ENCODE measurements at regions of chr6 and their contacts with region 1.

Region 1: DNA sequence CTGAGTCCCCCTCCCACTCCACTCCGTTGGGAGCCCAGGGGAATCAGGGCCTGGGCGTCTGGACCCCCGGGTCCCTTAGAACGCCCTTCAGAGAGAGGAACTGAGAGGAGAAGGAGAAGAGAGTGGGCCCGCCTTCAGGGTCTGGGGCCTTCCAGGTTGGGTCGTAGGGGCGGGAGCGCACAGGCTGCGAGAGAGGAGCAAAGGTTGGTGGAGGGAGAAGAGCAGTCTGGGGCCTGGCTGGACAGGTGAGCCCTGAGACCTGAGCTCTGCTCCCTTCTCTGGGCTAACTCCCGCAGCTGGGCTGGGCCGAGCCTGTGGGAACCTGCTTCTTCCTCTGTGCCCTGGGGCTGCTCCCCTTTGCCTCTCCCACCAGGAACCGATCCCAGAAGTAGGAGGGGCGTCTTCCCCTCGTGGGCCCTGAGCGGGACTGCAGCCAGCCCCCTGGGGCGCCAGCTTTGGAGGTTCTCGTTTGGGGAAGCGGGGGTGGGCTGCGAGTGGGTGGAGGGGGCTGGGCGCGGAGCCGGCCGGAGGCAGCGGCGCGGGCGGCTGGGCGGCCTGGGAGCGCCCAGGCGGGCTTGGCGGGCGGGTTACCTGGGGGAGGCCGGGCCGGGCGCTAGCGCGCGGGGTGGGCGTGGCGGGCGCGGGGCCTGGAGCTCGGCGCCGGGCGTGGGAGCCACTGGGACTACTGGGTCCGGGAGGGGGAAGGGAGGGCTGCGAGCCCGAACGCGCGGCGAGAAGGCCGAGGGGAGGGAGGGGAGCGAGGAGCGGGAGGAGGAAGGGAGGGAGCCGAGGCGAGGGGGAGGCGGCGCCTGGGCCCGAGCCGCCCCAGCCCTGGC is at the start of gene DDR1:
- DNase-seq: peak; percentile 81 to 85
- H3K4me3 ChIP-seq: peak within 1 kb of the TSS; percentile 98
- H3K27ac ChIP-seq: peak within 1 kb of the TSS; percentile 94
- H3K4me1 ChIP-seq: peaks cover 44% of the 10 kb centered on the region
- H3K27me3 ChIP-seq: no peaks in the 10 kb centered on the region
- CTCF ChIP-seq: no peak
- total RNA-seq, gene DDR1: 267 and 269 TPM in 2 replicates

Region 2: DNA sequence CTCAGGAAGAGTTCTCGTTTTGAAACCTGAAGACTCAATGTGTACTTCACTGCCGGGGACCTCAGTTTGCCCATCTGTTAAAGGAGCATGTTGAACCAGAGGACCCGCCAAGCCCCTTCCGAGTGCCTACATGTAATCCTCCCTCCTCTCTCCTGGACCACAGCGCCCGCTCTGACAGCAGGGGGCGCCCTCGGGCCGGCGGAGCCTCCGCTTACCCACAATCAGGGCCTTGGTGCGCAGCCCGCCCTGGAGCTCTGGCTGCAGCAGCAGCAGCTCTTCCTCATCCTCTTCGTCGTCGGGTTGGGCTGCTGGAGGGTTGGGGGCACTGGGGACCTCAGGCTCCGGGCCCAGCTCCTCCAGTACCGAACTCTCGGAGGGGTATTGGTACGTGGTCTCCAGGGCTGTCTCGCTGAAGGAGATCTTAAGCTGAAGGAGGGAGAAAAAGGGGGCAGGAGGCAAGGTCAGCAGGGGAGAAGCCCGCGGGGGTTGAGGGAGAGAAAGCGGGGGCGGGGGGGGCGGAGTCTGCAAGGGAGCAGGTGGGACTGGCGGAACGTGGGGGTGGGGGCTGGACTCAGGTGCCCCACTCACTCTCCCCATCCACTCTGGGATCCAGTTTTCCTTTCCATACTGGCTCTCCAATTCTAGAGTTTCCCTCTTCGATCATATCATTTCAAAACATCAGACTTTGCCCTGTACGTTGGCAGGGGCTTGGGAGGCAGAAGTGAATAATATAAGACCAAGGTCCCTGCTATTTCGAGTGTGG is 204.8 kb before region 1 on chr6:
- CTCF ChIA-PET with region 1: interaction called, 3 read pairs
- POLR2A ChIA-PET with region 1: no interaction called
- intact Hi-C with region 1: loop called (anchors 2 kb)
- DNase-seq: peak in 1 of 2 experiments; percentile 74
- H3K4me3 ChIP-seq: no peak overlapping the region
- H3K27ac ChIP-seq: no peak overlapping the region
- H3K4me1 ChIP-seq: peaks cover 30% of the 10 kb centered on the region
- H3K27me3 ChIP-seq: no peaks in the 10 kb centered on the region
- CTCF ChIP-seq: peak; percentile 94

Region 3: GRCh38 chr6:30742316-30743098 is 141.4 kb before region 1 on chr6 and contains the start of gene FLOT1:
- CTCF ChIA-PET with region 1: no interaction called
- POLR2A ChIA-PET with region 1: interaction called, 3 read pairs
- intact Hi-C with region 1: loop called (anchors 1 kb)
- DNase-seq: peak; percentile 94 to 100
- H3K4me3 ChIP-seq: peak within 1 kb of the TSS; percentile 86
- H3K27ac ChIP-seq: peak within 1 kb of the TSS; percentile 93
- H3K4me1 ChIP-seq: peaks cover 59% of the 10 kb centered on the region
- H3K27me3 ChIP-seq: no peaks in the 10 kb centered on the region
- CTCF ChIP-seq: no peak
- total RNA-seq, gene FLOT1: 225 and 234 TPM in 2 replicates

Region 4: DNA sequence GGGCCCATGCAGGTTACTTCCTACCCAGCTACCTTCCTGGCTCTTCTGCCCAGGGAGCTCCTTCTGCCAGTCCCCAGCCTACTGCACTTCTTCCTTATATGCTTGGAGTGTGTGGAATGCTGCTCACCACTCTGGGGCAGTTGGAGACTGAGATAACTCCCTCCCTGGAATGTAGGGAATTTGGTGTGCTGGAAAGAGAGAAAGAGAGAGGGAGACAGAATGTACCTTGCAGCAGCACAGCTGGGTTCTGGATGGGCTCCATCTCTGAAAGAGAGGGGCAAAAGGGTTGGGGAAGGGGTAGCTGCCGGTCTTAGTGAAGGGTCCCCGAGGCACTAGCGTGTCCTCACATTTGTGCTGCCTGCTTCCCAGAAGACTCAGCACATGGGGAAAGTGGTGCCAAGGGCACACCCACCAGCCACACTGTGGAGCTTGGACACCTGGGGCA is 39.8 kb before region 1 on chr6:
- CTCF ChIA-PET with region 1: interaction called, 3 read pairs
- POLR2A ChIA-PET with region 1: interaction called, 19 read pairs
- intact Hi-C with region 1: no loop called
- DNase-seq: peak; percentile 53 to 64
- H3K4me3 ChIP-seq: no peak overlapping the region
- H3K27ac ChIP-seq: no peak overlapping the region
- H3K4me1 ChIP-seq: peaks cover 34% of the 10 kb centered on the region
- H3K27me3 ChIP-seq: no peaks in the 10 kb centered on the region
- CTCF ChIP-seq: no peak

Region 5: DNA sequence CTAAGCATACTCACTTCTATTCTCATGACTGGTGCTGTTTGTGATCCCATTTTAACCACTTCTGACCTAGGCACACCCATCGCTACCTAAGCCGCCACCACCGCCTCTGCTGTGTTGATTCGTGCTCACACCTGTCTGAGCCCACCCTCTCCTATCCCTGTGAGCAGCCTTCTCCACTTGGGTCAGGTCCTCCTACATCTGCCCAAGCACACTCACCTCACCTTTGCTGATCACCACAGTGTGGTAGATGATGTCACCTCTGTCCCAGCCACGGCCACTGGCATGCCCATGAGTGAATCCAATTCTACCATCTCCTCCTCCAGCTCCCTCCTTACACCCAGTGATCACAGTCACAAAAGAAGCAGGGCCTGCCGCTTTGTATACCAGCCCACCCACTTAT is 147.2 kb after region 1 on chr6:
- CTCF ChIA-PET with region 1: no interaction called
- POLR2A ChIA-PET with region 1: no interaction called
- intact Hi-C with region 1: no loop called
- DNase-seq: no peak
- H3K4me3 ChIP-seq: no peak overlapping the region
- H3K27ac ChIP-seq: no peak overlapping the region
- H3K4me1 ChIP-seq: peaks cover 4% of the 10 kb centered on the region; the same call in 1 of the 2 replicates
- H3K27me3 ChIP-seq: no peaks in the 10 kb centered on the region
- CTCF ChIP-seq: no peak

Region 6: GRCh38 chr6:31079656-31080261 is 195.9 kb after region 1 on chr6:
- CTCF ChIA-PET with region 1: interaction called, 11 read pairs
- POLR2A ChIA-PET with region 1: interaction called, 3 read pairs
- intact Hi-C with region 1: no loop called
- DNase-seq: peak; percentile 46 to 64
- H3K4me3 ChIP-seq: no peak overlapping the region
- H3K27ac ChIP-seq: no peak overlapping the region
- H3K4me1 ChIP-seq: no peaks in the 10 kb centered on the region
- H3K27me3 ChIP-seq: no peaks in the 10 kb centered on the region
- CTCF ChIP-seq: peak; percentile 90